Body of pancreas (tissue), 4 donors: ENCODE measurements at regions of chr10 and their contacts with region 1.

Region 1: DNA sequence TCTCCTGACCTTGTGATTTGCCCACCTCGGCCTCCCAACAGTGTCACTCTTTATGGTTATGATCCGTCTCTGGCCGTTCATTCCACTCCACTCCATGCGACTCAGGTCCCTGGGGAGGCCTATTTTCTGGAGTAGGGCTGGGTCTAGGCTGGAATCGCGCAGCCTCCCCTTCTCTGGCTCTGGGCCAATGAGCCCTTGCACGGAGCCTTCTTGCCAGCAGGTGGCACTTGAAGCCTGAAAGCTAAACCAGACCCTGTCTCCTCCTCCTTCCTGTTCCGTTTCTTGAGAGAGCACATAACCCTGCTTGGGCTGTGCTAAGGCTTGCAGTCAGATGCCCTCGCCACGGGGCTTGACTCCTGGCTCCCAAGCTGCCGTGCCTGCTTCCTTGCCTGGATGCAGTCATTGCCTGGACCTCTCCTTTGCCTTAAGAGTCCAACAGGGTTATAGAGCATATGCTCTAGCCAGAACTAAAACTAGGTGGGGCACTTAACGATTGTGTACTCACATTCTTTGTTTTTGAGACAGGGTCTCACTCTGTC is 9.6 kb upstream of the DNAJB12 start:
- DNase-seq: peak; percentile 90 to 92 (median 91)
- ATAC-seq: peak; percentile 97
- H3K4me3 ChIP-seq: no peak overlapping the region
- H3K27ac ChIP-seq: peak overlapping the region in 2 of 4 donors; percentile 4 to 27
- H3K4me1 ChIP-seq: peaks cover 9% of the 10 kb centered on the region
- H3K27me3 ChIP-seq: no peaks in the 10 kb centered on the region
- CTCF ChIP-seq: peak; percentile 80 to 97 (median 93)
- POLR2A ChIP-seq: peak in 1 of 3 donors; percentile 38

Region 2: DNA sequence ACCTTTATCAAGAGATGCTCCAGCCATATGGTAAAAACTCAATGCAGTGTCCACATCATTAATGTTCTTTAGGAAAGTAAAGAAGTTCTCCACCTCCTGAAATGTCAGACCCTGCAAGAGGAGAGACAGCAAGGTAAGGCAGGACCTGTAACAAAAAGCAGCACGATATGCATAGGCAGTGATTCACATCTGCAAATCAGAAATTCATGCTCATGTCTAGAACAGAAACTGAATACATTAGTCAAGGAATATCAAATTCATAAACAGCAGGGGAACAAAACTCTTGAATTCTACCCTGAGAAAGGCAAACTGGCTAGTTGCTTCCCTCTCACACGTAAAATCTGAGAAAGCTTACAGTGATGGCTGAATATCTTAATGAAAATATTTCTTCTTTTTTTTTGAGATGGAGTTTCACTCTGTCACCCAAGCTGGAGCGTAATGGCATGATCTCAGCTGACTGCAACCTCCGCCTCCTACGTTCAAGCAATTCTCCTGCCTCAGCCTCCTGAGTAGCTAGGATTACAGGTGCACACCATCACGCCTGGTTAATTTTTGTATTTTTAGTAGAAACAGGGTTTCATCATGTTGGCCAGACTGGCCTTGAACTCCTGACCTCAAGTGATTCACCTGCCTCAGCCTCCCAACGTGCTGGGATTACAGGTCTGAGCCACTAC is 43.8 kb after region 1 on chr10:
- intact Hi-C with region 1: no loop called
- DNase-seq: no peak
- ATAC-seq: no peak
- H3K4me3 ChIP-seq: no peak overlapping the region
- H3K27ac ChIP-seq: no peak overlapping the region
- H3K4me1 ChIP-seq: no peaks in the 10 kb centered on the region
- H3K27me3 ChIP-seq: no peaks in the 10 kb centered on the region
- CTCF ChIP-seq: no peak
- POLR2A ChIP-seq: no peak

Region 3: GRCh38 chr10:72692057-72692910 is 328.0 kb after region 1 on chr10 and contains the start of gene MCU:
- intact Hi-C with region 1: loop called (anchors 10 kb)
- DNase-seq: peak; percentile 95 to 99 (median 98)
- ATAC-seq: peak; percentile 93
- H3K4me3 ChIP-seq: peak within 1 kb of the TSS; percentile 35 to 79
- H3K27ac ChIP-seq: peak within 1 kb of the TSS; percentile 81 to 96 (median 89)
- H3K4me1 ChIP-seq: peaks cover 29% of the 10 kb centered on the region
- H3K27me3 ChIP-seq: no peaks in the 10 kb centered on the region
- CTCF ChIP-seq: no peak
- POLR2A ChIP-seq: peak; percentile 77 to 90 (median 77)
- total RNA-seq, gene MCU: 7.9 to 17.1 TPM

Region 4: DNA sequence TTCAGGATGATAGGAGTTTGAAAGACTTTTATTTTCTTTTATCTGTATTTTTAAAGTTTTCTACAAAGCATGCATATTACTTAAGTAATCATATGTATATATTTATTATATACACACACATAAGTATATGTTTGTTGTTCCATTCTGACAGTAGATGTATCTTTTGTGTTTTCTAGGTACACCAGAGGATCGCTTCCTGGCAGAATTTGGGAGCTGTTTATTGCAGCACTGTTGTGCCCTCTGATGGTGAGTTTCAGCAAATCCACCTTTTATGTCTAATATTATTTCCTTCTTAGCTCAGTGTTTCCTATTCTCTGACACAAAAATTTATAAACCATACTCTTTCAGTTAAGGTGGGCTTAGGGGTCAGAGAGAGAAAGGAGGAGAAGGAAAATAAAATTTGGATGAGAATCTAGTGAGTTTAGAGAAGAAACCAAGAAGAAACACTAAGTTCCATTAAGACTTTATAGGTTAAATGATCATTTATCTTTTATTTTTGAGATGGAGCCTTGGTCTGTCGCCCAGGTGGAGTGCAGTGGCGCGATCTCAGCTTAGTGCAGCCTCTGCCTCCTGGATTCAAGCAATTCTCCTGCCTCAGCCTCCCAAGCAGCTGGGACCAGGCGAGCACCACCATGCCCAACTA is 470.0 kb after region 1 on chr10:
- intact Hi-C with region 1: loop called (anchors 5 kb)
- DNase-seq: peak; percentile 42 to 68 (median 52)
- ATAC-seq: peak; percentile 70
- H3K4me3 ChIP-seq: no peak overlapping the region
- H3K27ac ChIP-seq: no peak overlapping the region
- H3K4me1 ChIP-seq: peaks cover 15% of the 10 kb centered on the region
- H3K27me3 ChIP-seq: no peaks in the 10 kb centered on the region
- CTCF ChIP-seq: peak in 6 of 7 experiments; percentile 36 to 82 (median 74)
- POLR2A ChIP-seq: no peak

Region 5: GRCh38 chr10:72875250-72876055 is 511.1 kb after region 1 on chr10:
- intact Hi-C with region 1: loop called (anchors 10 kb)
- DNase-seq: no peak
- ATAC-seq: no peak
- H3K4me3 ChIP-seq: no peak overlapping the region
- H3K27ac ChIP-seq: no peak overlapping the region
- H3K4me1 ChIP-seq: no peaks in the 10 kb centered on the region
- H3K27me3 ChIP-seq: no peaks in the 10 kb centered on the region
- CTCF ChIP-seq: peak in 6 of 7 experiments; percentile 31 to 59 (median 47)
- POLR2A ChIP-seq: no peak